Activated CD4-positive, alpha-beta T cell treated with anti-CD3 and anti-CD28 coated beads for 36 hours (primary cell): ENCODE measurements at regions of chr7 and their contacts with region 1.

Region 1: GRCh38 chr7:149028346-149029109 is at the start of gene PDIA4:
- DNase-seq: peak; percentile 100
- ATAC-seq: peak; percentile 92
- H3K4me3 Mint-ChIP-seq: peak within 1 kb of the TSS; percentile 99
- H3K27ac Mint-ChIP-seq: peak within 1 kb of the TSS; percentile 94
- H3K4me1 Mint-ChIP-seq: peaks cover 32% of the 10 kb centered on the region
- H3K27me3 Mint-ChIP-seq: no peaks in the 10 kb centered on the region
- total RNA-seq, gene PDIA4: 88.3 to 90.1 TPM

Region 2: GRCh38 chr7:148884299-148885022 is 144.1 kb before region 1 on chr7:
- CTCF ChIA-PET with region 1: no interaction called
- POLR2A ChIA-PET with region 1: no interaction called
- intact Hi-C with region 1: loop called in 1 of 2 experiments (anchors 2 kb)
- DNase-seq: peak; percentile 97
- ATAC-seq: peak; percentile 92
- H3K4me3 Mint-ChIP-seq: peak overlapping the region; percentile 95
- H3K27ac Mint-ChIP-seq: peak overlapping the region; percentile 99
- H3K4me1 Mint-ChIP-seq: peaks cover 34% of the 10 kb centered on the region
- H3K27me3 Mint-ChIP-seq: no peaks in the 10 kb centered on the region

Region 3: GRCh38 chr7:148987010-148987750 is 41.3 kb before region 1 on chr7:
- CTCF ChIA-PET with region 1: no interaction called
- POLR2A ChIA-PET with region 1: no interaction called
- intact Hi-C with region 1: loop called (anchors 1 to 2 kb)
- DNase-seq: peak; percentile 88
- ATAC-seq: peak; percentile 84
- H3K4me3 Mint-ChIP-seq: peak overlapping the region; percentile 90
- H3K27ac Mint-ChIP-seq: peak overlapping the region; percentile 97
- H3K4me1 Mint-ChIP-seq: peaks cover 40% of the 10 kb centered on the region
- H3K27me3 Mint-ChIP-seq: peaks cover 2% of the 10 kb centered on the region

Region 4: DNA sequence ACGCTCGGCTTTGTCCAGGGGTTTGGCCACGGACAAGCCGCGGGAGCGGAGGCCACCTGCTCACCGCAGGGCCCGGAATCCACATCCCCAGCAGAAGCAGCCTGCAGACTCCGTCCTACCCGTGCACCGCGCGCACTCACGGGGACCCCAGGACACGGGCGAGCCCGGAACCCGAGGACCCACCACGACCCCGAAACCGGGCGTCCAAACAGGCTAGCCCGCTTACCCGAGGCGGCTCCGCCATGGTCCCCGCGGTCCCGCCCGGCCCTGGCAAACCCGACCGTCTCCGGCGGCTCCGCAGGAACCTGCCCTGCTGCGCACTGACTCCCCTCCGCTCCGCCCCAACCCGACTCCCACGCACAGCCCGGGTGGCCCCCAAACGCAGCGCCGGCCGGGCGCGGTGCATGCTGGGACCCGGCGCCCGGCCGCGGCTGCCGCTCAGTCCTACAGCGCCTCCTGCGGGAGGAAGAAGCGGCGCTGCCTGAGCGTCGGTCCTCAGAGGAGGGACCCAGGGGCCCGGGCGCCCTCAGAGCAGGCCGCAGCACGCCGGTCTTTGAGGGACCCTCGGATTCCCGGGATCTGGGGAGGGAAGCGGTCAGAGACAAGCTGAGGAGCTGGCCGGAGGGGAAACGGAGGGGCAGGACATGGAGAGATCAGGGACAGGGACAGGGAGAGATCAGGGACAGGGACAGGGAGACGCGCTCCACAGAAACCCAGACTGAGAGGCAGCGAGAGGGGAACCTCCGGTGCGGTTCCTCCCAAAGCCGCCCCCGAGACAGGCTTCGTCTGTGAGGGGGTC is 62.1 kb after region 1 on chr7 and contains the start of gene ZNF786:
- CTCF ChIA-PET with region 1: interaction called, 4 read pairs
- POLR2A ChIA-PET with region 1: no interaction called
- intact Hi-C with region 1: loop called (anchors 1 kb)
- DNase-seq: peak; percentile 97
- ATAC-seq: peak; percentile 87
- H3K4me3 Mint-ChIP-seq: peak within 1 kb of the TSS; percentile 89
- H3K27ac Mint-ChIP-seq: peak within 1 kb of the TSS; percentile 100
- H3K4me1 Mint-ChIP-seq: peaks cover 19% of the 10 kb centered on the region
- H3K27me3 Mint-ChIP-seq: no peaks in the 10 kb centered on the region
- total RNA-seq, gene ZNF786: 4.4 to 4.8 TPM

Region 5: GRCh38 chr7:149147072-149147751 is 118.7 kb after region 1 on chr7 and contains the start of gene ZNF398:
- CTCF ChIA-PET with region 1: no interaction called
- POLR2A ChIA-PET with region 1: no interaction called
- intact Hi-C with region 1: loop called (anchors 1 to 2 kb)
- DNase-seq: peak; percentile 87
- ATAC-seq: peak; percentile 71
- H3K4me3 Mint-ChIP-seq: peak within 1 kb of the TSS; percentile 98
- H3K27ac Mint-ChIP-seq: peak within 1 kb of the TSS; percentile 99
- H3K4me1 Mint-ChIP-seq: peaks cover 34% of the 10 kb centered on the region
- H3K27me3 Mint-ChIP-seq: no peaks in the 10 kb centered on the region
- total RNA-seq, gene ZNF398: 9.6 to 10.5 TPM

Region 6: GRCh38 chr7:149195180-149196150 is 166.9 kb after region 1 on chr7 and contains the start of gene ZNF282:
- CTCF ChIA-PET with region 1: no interaction called
- POLR2A ChIA-PET with region 1: no interaction called
- intact Hi-C with region 1: no loop called
- DNase-seq: peak; percentile 89
- ATAC-seq: peak; percentile 91
- H3K4me3 Mint-ChIP-seq: peak within 1 kb of the TSS; percentile 95
- H3K27ac Mint-ChIP-seq: peak within 1 kb of the TSS; percentile 94
- H3K4me1 Mint-ChIP-seq: peaks cover 42% of the 10 kb centered on the region
- H3K27me3 Mint-ChIP-seq: no peaks in the 10 kb centered on the region
- total RNA-seq, gene ZNF282: 41.1 to 46.3 TPM

Region 7: DNA sequence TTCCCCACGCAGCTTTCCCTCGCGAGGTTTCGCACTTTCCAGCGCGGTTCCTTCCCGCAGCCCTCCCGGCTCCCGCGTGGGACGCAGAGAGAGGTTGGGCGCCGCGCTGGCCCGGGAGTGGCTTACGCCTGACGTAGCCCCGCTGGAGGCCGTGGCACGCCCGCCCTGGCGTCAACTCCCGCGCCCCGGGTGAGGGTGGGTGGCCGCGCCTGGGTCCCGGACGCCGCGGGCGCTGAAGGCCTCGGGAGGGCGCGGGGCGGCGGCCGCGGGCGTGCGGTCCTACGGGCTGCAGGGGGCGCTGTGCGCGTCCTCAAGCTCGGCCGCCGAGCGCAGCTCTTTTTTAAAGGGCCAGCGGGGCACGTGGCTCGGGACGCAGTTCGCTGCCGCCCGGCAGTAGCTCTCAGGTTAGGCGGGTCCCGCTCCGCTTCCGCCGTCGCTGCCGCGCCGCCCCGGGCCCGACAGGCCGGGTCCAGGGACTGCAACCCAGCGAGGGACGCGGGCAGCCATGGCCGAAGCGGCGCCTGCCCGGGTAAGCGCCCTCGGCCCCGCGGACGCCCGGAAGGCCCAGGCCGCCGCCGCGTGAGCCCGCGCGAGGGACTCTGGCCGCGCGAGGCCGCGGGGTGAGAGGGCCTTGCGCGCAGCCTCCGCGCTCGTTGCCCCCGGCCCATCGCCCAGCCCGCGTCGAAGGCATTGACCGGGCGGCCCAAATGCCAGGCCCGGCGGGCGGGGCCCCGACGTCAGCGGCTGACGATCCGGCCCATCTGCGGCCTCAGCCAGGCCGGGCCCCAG is 233.5 kb after region 1 on chr7 and contains the start of gene ZNF783:
- CTCF ChIA-PET with region 1: no interaction called
- POLR2A ChIA-PET with region 1: interaction called, 5 read pairs
- intact Hi-C with region 1: loop called in 1 of 2 experiments (anchors 5 kb)
- DNase-seq: peak; percentile 92
- ATAC-seq: peak; percentile 84
- H3K4me3 Mint-ChIP-seq: peak within 1 kb of the TSS; percentile 74
- H3K27ac Mint-ChIP-seq: peak within 1 kb of the TSS; percentile 96
- H3K4me1 Mint-ChIP-seq: peaks cover 40% of the 10 kb centered on the region
- H3K27me3 Mint-ChIP-seq: no peaks in the 10 kb centered on the region
- total RNA-seq, gene ZNF783: 14.5 to 15.4 TPM